ENCODE measurements at regions of chr18 and their contacts with region 1.

Region 1: GRCh38 chr18:2985628-2986027 is 27.3 kb downstream of the LPIN2 start:
- H3K4me3 ChIP-seq: no peak overlapping the region
- H3K27ac ChIP-seq: no peak overlapping the region
- H3K4me1 ChIP-seq: peaks cover 20% of the 10 kb centered on the region
- CTCF ChIP-seq: no peak

Region 2: GRCh38 chr18:2932247-2933181 is 53.1 kb before region 1 on chr18:
- CTCF ChIA-PET with region 1: interaction called, 14 read pairs
- POLR2A ChIA-PET with region 1: no interaction called
- H3K4me3 ChIP-seq: no peak overlapping the region
- H3K27ac ChIP-seq: no peak overlapping the region
- H3K4me1 ChIP-seq: no peaks in the 10 kb centered on the region
- CTCF ChIP-seq: peak; percentile 33; the same call in 1 of the 2 replicates

Region 3: DNA sequence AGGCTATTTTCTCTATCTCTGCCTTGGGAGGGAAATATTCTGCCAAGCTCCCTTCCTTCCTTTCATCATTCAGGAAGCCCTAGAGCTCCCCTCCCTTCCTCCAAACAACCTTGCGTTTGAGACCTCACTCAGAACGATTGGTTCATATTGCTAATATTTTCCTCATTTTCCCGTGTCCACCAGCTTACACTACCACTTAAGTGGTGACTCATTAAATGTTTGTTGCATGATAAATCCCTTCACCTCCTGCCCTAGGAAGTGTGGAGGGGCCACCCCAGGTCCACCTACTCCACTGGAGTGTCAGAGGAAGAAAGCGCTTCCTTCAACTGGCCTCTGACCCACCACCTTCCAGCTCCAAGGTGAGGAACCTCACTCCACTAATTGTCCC is 29.6 kb after region 1 on chr18:
- CTCF ChIA-PET with region 1: no interaction called
- POLR2A ChIA-PET with region 1: no interaction called
- H3K4me3 ChIP-seq: no peak overlapping the region
- H3K27ac ChIP-seq: no peak overlapping the region
- H3K4me1 ChIP-seq: no peaks in the 10 kb centered on the region; the same call in 1 of the 2 replicates
- CTCF ChIP-seq: no peak

Measured in HEK293 (cell line).